SK-N-SH (cell line): ENCODE measurements at regions of chr12 and their contacts with region 1.

Region 1: GRCh38 chr12:107093417-107094182 is at the start of gene CRY1:
- DNase-seq: peak; percentile 95
- H3K4me3 ChIP-seq: peak within 1 kb of the TSS; percentile 80 to 87
- H3K27ac ChIP-seq: peak within 1 kb of the TSS; percentile 88 to 96
- H3K4me1 ChIP-seq: peaks cover 0 to 15% of the 10 kb centered on the region in 2 experiments; a peak in 2 of 4 replicates
- H3K27me3 ChIP-seq: no peaks in the 10 kb centered on the region
- CTCF ChIP-seq: no peak
- EP300 ChIP-seq: no peak
- RAD21 ChIP-seq: no peak
- polyA plus RNA-seq, gene CRY1: 4.9 and 6.7 TPM in 2 replicates

Region 2: DNA sequence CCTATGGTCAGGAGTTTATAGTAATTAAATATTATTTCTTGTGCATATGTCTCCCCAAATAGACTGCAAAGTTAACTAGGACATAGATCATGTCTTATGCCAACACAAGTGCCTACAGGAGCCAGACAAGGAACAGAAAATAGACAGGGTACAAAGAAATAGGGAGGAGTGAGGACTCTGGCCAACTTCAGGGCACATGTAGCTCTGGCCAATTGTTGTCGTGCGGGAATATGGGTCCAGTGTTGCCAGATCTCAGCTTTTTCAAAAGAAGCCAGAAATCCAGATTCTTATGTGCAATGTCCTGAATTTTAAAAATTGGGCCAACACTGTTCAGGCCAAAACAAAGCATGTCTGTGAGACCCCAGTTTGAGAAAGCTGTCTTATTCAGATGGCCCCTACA is 442.0 kb before region 1 on chr12:
- CTCF ChIA-PET with region 1: no interaction called
- POLR2A ChIA-PET with region 1: no interaction called
- DNase-seq: no peak
- H3K4me3 ChIP-seq: no peak overlapping the region
- H3K27ac ChIP-seq: no peak overlapping the region
- H3K4me1 ChIP-seq: no peaks in the 10 kb centered on the region
- H3K27me3 ChIP-seq: no peaks in the 10 kb centered on the region
- CTCF ChIP-seq: no peak
- EP300 ChIP-seq: no peak
- RAD21 ChIP-seq: no peak

Region 3: DNA sequence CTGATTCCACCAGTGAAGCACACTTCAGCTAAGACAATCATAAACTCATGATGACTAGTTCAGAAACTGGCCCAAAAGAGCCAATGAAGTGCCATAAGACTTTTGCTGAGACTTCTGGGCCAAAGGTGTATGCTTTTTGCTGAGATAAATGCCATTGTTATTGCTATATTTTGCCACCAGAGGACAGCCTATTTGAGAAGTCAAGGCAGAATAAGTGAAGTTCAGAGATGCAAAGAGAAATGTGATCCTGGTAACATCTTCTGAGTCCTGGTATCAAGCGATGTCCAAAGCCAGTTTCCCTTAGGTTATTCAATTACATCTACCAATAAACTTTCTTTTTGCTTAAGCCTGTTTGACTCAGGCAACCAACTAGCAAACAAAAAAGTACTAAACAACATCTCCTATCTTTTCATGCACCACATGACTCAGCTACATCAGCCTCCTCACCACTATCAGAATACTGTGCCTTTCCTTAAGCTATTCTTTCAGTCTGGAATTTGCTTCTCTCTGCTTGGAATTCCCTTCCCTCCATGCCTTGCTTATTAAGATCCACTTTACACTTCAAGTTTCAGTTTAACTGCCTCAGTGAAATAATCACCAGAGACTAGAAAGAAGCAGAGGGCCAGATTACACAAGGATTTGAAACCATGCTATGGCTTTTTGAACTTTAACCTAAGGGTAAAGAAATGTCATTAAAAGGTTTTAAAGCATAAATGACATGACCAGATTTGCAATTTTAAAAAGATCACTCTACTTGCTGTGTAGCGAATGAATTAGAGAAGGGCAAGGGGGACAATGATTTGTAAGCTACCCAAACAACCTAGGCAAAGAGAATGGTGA is 14.2 kb before region 1 on chr12:
- CTCF ChIA-PET with region 1: interaction called, 27 read pairs
- POLR2A ChIA-PET with region 1: no interaction called
- DNase-seq: no peak
- H3K4me3 ChIP-seq: no peak overlapping the region
- H3K27ac ChIP-seq: no peak overlapping the region
- H3K4me1 ChIP-seq: no peaks in the 10 kb centered on the region
- H3K27me3 ChIP-seq: no peaks in the 10 kb centered on the region
- CTCF ChIP-seq: peak; percentile 58
- EP300 ChIP-seq: no peak
- RAD21 ChIP-seq: peak; percentile 46

Region 4: DNA sequence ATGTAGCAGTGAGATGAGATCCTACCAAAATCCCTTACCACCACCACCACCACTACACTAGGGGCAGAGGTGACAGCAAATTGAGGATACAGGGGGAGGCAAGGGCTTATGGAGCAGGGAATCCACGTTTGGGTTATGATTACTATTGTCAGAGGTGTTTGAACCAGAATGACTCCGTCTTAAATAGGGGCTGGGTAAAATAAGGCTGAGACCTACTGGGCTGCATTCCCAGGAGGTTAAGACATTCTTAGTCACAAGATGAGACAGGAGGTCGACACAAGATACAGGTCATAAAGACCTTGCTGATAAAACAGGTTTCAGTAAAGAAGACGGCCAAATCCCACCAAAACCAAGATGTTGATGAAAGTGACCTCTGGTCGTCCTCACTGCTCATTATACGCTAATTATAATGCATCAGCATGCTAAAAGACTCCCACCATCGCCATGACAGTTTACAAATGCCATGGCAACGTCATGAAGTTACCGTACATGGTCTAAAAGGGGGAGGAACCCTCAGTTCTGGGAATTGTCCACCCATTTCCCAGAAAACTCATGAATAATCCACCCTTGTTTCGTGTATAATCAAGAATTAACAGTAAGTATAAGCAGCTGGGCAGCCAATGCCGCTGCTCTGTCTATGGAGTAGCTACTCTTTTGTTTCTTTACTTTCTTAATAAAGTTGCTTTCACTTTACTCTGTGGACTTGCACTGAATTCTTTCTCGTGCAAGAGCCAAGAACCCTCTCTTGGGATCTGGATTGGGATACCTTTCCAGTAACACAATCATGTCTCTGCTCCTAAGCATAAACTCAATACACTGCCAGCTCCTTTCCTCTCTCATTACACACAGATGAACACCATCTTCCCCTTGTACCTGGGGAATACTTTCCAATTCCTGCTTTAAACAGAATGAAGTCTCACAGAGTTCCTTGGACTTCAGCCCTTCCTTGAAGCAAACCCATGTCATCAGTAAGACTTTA is 16.4 kb after region 1 on chr12:
- CTCF ChIA-PET with region 1: interaction called, 46 read pairs
- POLR2A ChIA-PET with region 1: no interaction called
- DNase-seq: no peak
- H3K4me3 ChIP-seq: no peak overlapping the region
- H3K27ac ChIP-seq: no peak overlapping the region
- H3K4me1 ChIP-seq: no peaks in the 10 kb centered on the region
- H3K27me3 ChIP-seq: no peaks in the 10 kb centered on the region; the same call in 1 of the 2 replicates
- CTCF ChIP-seq: no peak
- EP300 ChIP-seq: no peak
- RAD21 ChIP-seq: no peak